Psoas muscle (tissue), 8 donors: ENCODE measurements at regions of chr10 and their contacts with region 1.

Region 1: GRCh38 chr10:52488606-52489485 is 174.8 kb downstream of the DKK1 start:
- DNase-seq: no peak
- ATAC-seq: peak in 1 of 4 donors; percentile 55
- H3K4me3 ChIP-seq: no peak overlapping the region
- H3K27ac ChIP-seq: no peak overlapping the region
- H3K4me1 ChIP-seq: peaks cover 6% of the 10 kb centered on the region
- H3K27me3 ChIP-seq: no peaks in the 10 kb centered on the region
- CTCF ChIP-seq: peak; percentile 65

Region 2: DNA sequence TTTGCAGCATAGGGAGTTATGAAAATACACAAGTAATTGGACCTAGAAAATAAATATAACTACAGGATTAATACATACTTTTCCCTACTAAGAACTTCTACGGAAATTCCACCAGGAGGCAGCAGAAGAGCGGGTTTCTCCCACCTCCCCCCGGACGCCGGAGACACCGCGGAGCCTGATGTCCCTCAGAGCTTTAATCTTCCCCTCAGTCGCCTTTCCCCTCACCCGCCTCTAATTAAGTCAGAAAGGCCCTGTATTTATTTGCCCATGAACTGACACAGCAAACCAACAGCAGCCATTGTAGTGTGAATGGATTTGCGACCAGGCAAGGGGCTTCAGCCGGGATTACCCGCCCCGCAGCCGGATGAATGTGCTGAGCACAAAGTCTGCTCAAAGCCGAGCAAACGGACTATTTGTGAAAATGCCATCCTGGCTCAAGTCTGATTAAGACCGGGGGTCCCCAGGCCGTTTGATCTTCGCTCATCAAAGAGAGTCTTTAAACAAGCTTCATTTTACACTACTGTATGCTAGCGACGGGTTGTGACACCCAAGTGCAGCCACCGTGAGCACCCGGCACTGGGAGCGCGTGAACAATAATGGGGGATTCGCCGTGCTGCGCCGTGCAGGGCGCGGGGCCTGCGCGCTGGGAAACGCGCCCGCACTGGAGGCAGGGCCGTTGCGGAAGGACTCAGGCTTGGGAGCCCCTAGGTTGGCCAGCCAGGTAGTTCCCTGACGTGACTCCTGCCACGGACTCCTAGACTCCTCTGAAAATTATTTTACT is 180.4 kb before region 1 on chr10:
- intact Hi-C with region 1: loop called (anchors 1 to 5 kb)
- DNase-seq: peak; percentile 40 to 71
- ATAC-seq: peak; percentile 80 to 97 (median 88)
- H3K4me3 ChIP-seq: peak overlapping the region; percentile 67
- H3K27ac ChIP-seq: no peak overlapping the region
- H3K4me1 ChIP-seq: peaks cover 4% of the 10 kb centered on the region
- H3K27me3 ChIP-seq: no peaks in the 10 kb centered on the region
- CTCF ChIP-seq: peak; percentile 76